Activated CD4-positive, alpha-beta T cell treated with anti-CD3 and anti-CD28 coated beads for 36 hours (primary cell): ENCODE measurements at regions of chr2 and their contacts with region 1.

Region 1: GRCh38 chr2:136008205-136008865 is 22.9 kb upstream of the DARS1 start:
- DNase-seq: peak; percentile 74
- ATAC-seq: peak; percentile 91
- H3K4me3 Mint-ChIP-seq: no peak overlapping the region
- H3K27ac Mint-ChIP-seq: peak overlapping the region; percentile 47
- H3K4me1 Mint-ChIP-seq: peaks cover 31% of the 10 kb centered on the region
- H3K27me3 Mint-ChIP-seq: no peaks in the 10 kb centered on the region

Region 2: DNA sequence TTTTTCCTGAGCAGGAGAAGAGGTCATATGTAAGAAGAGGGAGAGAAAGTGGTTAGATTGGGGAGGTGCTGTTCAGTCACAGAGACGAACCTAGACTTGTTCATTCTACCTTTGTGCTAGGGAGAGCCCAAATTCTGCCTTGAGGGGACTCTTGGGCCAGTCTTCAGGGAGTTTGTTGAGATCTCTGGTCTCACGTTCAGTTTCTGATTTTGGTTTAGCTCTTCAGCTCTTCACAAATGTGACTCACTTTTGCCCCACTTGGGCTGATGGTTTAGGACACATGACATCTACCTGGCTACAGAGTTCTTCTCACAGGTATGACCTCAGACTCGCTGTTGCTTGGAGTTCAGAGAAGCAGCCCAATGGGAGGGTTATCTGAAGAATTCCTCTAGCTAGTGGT is 26.3 kb after region 1 on chr2:
- CTCF ChIA-PET with region 1: no interaction called
- POLR2A ChIA-PET with region 1: no interaction called
- intact Hi-C with region 1: no loop called
- DNase-seq: no peak
- ATAC-seq: peak; percentile 51
- H3K4me3 Mint-ChIP-seq: no peak overlapping the region
- H3K27ac Mint-ChIP-seq: no peak overlapping the region
- H3K4me1 Mint-ChIP-seq: no peaks in the 10 kb centered on the region
- H3K27me3 Mint-ChIP-seq: no peaks in the 10 kb centered on the region

Region 3: DNA sequence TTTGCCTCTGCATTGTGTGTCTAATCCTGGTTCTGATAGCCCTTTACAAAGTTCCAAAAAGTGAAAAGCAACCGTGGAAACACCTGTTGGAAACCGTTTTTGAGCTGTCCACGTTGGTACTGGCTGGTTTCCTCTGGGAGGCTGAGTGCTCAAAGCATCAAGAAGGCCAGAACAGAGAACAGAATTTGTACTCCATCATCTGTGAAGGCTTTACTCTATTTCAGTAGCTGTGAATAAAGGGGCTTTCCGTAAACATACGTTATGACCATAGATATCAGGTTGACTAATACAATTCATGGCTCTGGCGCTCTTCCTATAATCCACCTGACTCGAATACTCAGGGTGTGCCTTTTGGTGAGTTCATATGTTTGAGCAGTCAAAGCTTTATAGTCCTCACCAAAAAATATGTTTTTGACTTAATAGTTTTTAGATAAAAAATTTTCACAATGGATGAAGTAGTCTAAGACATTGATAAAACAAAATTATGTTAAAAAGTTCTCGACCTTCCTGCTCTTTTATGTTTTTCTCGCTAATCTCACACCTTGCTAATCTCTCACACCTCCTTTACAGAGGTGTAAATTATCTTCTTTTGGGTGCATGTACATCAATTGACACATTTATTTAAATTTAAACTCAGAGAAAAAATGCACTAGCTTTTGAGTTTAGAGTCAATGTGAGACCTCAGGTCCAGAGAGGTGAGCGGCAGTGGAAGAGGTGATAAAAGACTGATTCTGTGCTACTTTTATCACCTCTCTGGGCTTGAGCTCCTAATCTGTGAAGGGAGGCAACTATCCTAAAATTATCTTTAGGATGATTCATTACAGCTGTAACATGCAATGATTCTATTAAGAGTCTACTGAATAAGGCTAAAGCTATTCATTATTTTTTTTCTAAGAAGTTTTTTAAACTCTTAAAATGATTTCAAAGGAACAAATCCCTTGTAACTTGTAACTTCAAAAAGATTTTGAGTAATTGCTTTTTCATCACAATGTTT is 44.3 kb after region 1 on chr2:
- CTCF ChIA-PET with region 1: interaction called, 4 read pairs
- POLR2A ChIA-PET with region 1: no interaction called
- intact Hi-C with region 1: loop called (anchors 2 to 5 kb)
- DNase-seq: peak; percentile 20
- ATAC-seq: peak; percentile 21
- H3K4me3 Mint-ChIP-seq: no peak overlapping the region
- H3K27ac Mint-ChIP-seq: peak overlapping the region; percentile 91
- H3K4me1 Mint-ChIP-seq: peaks cover 79% of the 10 kb centered on the region
- H3K27me3 Mint-ChIP-seq: no peaks in the 10 kb centered on the region

Region 4: DNA sequence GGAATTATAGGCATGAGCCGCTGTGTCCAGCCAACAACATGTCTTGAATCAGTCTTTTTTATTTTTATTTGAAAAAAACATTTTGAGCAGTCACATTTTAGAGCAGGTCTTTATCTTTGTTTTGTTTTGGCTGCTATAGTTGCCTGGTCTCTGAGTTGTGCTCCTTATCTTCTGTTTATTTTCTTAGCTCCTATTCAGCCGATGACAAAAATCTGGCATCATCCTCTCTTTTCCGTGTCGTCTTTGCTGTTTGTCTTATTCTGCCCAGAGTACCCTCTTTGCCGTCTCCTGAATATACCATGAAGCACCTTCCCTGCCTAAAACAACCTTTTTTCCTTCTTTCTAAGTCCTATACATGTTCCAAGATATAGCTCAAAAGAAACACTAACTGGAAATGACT is 958.1 kb after region 1 on chr2:
- CTCF ChIA-PET with region 1: no interaction called
- POLR2A ChIA-PET with region 1: no interaction called
- intact Hi-C with region 1: no loop called
- DNase-seq: no peak
- ATAC-seq: no peak
- H3K4me3 Mint-ChIP-seq: no peak overlapping the region
- H3K27ac Mint-ChIP-seq: no peak overlapping the region
- H3K4me1 Mint-ChIP-seq: no peaks in the 10 kb centered on the region
- H3K27me3 Mint-ChIP-seq: peaks cover 2% of the 10 kb centered on the region